GM13976 (cell line): ENCODE measurements at regions of chr1 and their contacts with region 1.

Region 1: GRCh38 chr1:208245185-208245705 is 1.1 kb upstream of the PLXNA2 start:
- DNase-seq: peak; percentile 79
- CTCF ChIP-seq: peak; percentile 78

Region 2: GRCh38 chr1:207673399-207673798 is 571.8 kb before region 1 on chr1:
- in situ Hi-C with region 1: no loop called
- DNase-seq: no peak
- CTCF ChIP-seq: no peak

Region 3: GRCh38 chr1:208010487-208011079 is 234.7 kb before region 1 on chr1:
- in situ Hi-C with region 1: loop called (anchors 10 kb)
- DNase-seq: no peak
- CTCF ChIP-seq: no peak

Region 4: DNA sequence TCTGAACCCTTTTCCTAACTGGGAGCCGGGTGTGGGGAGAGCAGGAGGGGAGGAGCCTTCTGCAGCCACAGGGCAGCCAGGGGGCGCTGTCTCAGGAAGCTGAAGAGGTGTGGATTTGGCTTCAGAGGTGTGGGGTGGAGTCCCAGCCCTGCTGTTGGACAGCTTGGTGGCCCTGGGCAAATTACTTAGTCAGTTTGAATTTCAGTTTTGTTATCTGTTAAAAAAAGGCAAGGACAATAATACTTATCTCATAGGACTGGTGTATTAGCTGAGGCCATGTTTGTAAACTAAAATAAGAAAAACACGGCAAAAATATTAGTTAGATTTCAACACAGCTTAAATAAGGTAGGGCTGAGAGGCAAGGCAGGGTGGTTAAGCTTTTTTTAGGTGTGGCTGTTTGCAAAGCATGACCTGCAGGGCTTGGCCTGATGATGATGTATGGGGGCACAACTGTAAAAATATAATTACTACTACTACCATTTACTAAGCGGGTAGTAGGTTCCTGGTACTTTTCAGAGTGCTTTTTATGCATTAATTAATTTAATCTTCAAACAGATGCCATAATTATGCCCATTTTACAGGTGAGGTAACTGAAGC is 112.9 kb before region 1 on chr1:
- in situ Hi-C with region 1: loop called (anchors 10 kb)
- DNase-seq: peak; percentile 82
- CTCF ChIP-seq: peak; percentile 67

Region 5: DNA sequence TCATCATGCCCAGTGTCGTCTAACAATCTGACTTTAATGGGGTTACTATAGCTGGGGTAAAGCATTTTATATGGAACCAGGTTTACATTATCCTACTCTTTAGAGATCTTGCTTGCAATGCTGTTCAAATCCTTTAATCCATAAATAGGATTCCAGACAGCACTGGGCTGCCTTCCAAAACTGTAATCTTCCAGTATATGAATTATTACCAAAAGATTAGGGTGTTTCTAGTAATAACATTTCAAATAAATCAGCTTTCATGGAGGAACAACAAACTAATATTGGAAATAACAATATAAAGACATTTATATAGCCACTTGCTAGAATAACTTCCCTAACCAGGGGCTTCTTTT is 87.5 kb after region 1 on chr1:
- in situ Hi-C with region 1: no loop called
- DNase-seq: no peak
- CTCF ChIP-seq: no peak

Region 6: GRCh38 chr1:209326831-209327230 is 1081.6 kb after region 1 on chr1:
- in situ Hi-C with region 1: no loop called
- DNase-seq: no peak
- CTCF ChIP-seq: no peak